Sigmoid colon (tissue), 7 donors: ENCODE measurements at regions of chr4 and their contacts with region 1.

Region 1: DNA sequence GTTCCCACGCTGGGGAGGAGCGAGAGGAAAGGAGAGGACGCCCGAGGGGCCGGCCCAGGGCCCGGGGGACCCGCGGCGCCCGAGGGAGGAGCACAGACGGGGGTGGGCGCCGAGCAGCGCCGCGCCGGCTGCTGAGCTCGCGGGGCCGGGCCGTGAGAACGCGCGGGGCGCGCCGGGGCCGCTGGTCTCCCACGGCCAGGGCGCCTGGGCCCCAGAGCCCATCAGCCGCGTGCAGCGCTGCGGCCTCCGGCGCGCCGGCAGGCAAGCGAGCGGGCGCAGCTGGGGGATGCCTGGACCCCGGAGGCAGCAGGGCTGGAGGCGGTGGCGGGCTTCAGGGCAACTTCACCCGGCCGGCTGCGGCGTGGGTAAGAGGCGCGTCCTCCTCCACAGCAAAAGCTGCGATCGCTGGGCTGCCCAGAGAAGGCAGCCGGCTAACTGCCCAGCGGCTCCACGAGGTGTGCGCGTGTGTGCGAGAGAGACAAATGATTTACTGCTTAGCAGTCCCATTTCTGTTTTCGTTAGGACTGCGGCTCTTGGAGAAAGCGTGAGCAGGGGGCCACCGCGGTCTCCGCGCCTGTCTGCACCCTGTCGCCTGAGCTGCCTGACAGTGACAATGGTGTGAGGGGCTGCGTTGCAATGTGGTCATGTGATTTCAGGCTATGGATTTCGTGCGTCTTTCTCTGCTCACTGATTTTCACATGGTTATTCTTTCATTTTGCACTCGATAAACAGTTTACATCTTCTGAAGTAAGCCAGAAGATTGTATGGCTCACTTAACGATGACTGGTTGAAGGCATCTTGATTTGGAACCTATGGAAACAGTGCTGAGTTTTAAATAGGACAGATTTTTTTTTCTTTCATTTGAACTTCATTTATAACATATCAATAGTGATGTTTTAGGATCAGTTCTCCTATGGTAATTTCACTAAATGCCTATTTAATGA is 1.2 kb downstream of the GUCY1A1 start:
- DNase-seq: peak; percentile 88
- H3K4me3 ChIP-seq: peak overlapping the region; percentile 75 to 82 (median 80)
- H3K27ac ChIP-seq: peak overlapping the region; percentile 90 to 97 (median 94)
- H3K4me1 ChIP-seq: peaks cover 0 to 44% (median 24%) of the 10 kb centered on the region in 4 donors
- H3K27me3 ChIP-seq: no peaks in the 10 kb centered on the region
- CTCF ChIP-seq: no peak
- EP300 ChIP-seq: no peak
- POLR2A ChIP-seq: peak in 1 of 2 donors; percentile 50

Region 2: GRCh38 chr4:155758481-155759404 is 90.9 kb after region 1 on chr4 and contains the start of gene GUCY1B1:
- intact Hi-C with region 1: loop called (anchors 2 kb)
- DNase-seq: peak; percentile 98
- H3K4me3 ChIP-seq: peak within 1 kb of the TSS; percentile 84 to 95 (median 93)
- H3K27ac ChIP-seq: peak within 1 kb of the TSS; percentile 94 to 97 (median 95)
- H3K4me1 ChIP-seq: peaks cover 0 to 42% (median 22%) of the 10 kb centered on the region in 4 donors
- H3K27me3 ChIP-seq: no peaks in the 10 kb centered on the region
- CTCF ChIP-seq: peak; percentile 27 to 46 (median 40)
- EP300 ChIP-seq: no peak
- POLR2A ChIP-seq: peak; percentile 20 to 38
- total RNA-seq, gene GUCY1B1: 45.1 to 115 (median 80.1) TPM

Region 3: GRCh38 chr4:155837203-155837796 is 169.5 kb after region 1 on chr4:
- intact Hi-C with region 1: no loop called
- DNase-seq: no peak
- H3K4me3 ChIP-seq: no peak overlapping the region
- H3K27ac ChIP-seq: no peak overlapping the region
- H3K4me1 ChIP-seq: no peaks in the 10 kb centered on the region
- H3K27me3 ChIP-seq: no peaks in the 10 kb centered on the region
- CTCF ChIP-seq: no peak
- EP300 ChIP-seq: no peak
- POLR2A ChIP-seq: no peak